CD4-positive, alpha-beta T cell (primary cell): ENCODE measurements at regions of chr15 and their contacts with region 1.

Region 1: GRCh38 chr15:77440378-77440999 is 19.8 kb downstream of the HMG20A start:
- DNase-seq: no peak
- ATAC-seq: no peak
- H3K4me3 ChIP-seq: no peak overlapping the region
- H3K4me3 Mint-ChIP-seq: no peak overlapping the region
- H3K27ac ChIP-seq: no peak overlapping the region
- H3K27ac Mint-ChIP-seq: no peak overlapping the region
- H3K4me1 ChIP-seq: no peaks in the 10 kb centered on the region
- H3K4me1 Mint-ChIP-seq: peaks cover 65% of the 10 kb centered on the region
- H3K27me3 ChIP-seq: no peaks in the 10 kb centered on the region
- H3K27me3 Mint-ChIP-seq: no peaks in the 10 kb centered on the region
- CTCF ChIP-seq: no peak

Region 2: DNA sequence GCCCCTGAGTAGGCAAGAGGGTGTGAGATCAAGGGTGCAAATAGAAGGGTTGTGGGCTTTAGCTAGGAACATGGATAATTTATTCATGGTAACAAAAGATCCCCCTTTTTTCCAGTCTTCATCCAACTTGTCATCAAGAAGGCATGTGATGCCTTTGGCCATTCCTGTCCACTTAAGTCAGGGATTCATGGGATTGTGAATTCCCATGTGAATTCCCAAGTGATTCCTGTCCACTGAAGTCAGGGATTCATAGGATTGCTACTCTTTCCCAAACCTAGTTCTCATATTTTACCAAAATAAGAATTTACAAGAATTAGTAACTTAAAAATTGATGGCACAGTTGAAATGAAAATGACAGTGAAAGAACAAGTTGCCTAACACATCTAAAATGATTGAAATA is 21.0 kb after region 1 on chr15:
- CTCF ChIA-PET with region 1: interaction called, 4 read pairs
- POLR2A ChIA-PET with region 1: no interaction called
- intact Hi-C with region 1: loop called in 1 of 2 experiments (anchors 2 kb)
- DNase-seq: no peak
- ATAC-seq: no peak
- H3K4me3 ChIP-seq: no peak overlapping the region
- H3K4me3 Mint-ChIP-seq: no peak overlapping the region
- H3K27ac ChIP-seq: no peak overlapping the region
- H3K27ac Mint-ChIP-seq: no peak overlapping the region
- H3K4me1 ChIP-seq: peaks cover 8% of the 10 kb centered on the region
- H3K4me1 Mint-ChIP-seq: peaks cover 14% of the 10 kb centered on the region
- H3K27me3 ChIP-seq: no peaks in the 10 kb centered on the region
- H3K27me3 Mint-ChIP-seq: no peaks in the 10 kb centered on the region
- CTCF ChIP-seq: no peak